Right ventricle myocardium inferior (tissue), 1 donor: ENCODE measurements at regions of chr2 and their contacts with region 1.

Region 1: DNA sequence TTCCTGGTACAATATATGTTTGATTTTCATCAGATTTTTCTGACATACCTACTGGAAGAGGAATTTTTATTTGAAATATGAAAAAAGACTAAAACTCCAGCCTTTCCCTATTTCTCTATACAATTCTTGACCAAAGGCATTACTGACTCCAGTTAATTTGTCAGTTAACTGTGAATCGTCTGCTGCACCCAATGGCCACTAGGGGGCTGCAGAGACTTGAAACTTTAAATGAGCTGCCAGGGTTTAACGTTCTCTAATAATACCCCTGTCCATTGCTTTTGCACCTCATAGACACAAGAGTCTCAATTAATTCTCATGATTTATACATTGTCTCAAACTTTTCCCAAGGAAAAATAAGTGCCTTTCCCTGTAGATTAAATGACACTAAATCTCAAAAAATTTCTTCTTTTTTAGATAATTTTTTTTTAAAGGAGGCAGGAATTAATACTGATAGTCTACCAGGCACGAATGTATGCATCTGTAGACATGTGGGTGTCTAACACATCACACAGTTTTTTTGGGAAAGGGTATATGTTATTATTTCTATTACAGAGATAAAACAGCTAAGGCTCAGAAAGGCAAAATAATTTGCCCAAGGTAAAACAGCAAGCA is 1.8 kb upstream of the ALK start:
- DNase-seq: no peak
- ATAC-seq: no peak

Region 2: GRCh38 chr2:30026087-30027055 is 103.2 kb after region 1 on chr2:
- intact Hi-C with region 1: loop called (anchors 2 kb)
- DNase-seq: peak; percentile 69
- ATAC-seq: peak; percentile 59

Region 3: GRCh38 chr2:30072250-30072842 is 149.1 kb after region 1 on chr2:
- intact Hi-C with region 1: loop called (anchors 2 kb)
- DNase-seq: no peak
- ATAC-seq: peak; percentile 76

Region 4: GRCh38 chr2:30106543-30106942 is 183.3 kb after region 1 on chr2:
- intact Hi-C with region 1: no loop called
- DNase-seq: no peak
- ATAC-seq: no peak